ENCODE measurements at regions of chr18 and their contacts with region 1.

Region 1: DNA sequence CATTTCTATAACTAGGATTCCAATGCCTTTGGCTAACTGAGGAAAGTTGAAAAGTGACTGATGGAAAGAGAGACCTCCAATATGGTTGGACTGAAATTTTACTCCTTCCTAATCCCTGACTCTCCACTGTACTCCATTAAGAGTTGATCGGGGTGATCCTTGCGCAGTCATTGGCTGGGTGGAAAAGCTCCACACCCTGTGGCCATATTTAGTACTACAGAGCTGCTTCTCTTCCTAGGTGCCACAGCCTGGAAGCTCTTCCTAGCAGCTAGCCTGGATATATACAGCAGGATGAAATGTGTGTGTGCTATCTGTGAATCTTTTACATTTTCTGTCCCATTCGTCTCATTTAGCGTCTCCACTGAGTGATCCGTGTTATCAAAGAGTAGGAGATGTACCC is 71.2 kb downstream of the MEP1B start:
- DNase-seq: no peak
- H3K4me3 ChIP-seq: no peak overlapping the region
- H3K27ac ChIP-seq: no peak overlapping the region
- H3K4me1 ChIP-seq: no peaks in the 10 kb centered on the region
- H3K27me3 ChIP-seq: no peaks in the 10 kb centered on the region
- CTCF ChIP-seq: no peak
- POLR2A ChIP-seq: no peak

Region 2: DNA sequence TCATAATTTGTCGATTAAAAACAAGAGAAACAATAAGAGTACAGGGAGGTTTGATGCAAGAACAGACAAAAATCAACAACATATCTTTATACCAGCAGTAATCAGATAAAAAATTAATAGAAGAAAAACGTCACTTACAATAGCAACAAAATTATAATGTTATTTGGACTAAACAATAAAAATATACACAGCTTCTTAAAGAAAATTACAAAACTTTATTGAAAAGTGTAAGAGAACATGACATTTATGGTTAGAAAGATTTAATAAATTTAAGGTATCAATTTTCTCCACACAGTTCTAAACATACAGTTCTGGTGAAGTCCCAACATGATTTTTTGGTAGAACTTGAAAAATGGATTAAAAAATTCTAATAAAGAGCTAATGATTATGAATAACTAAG is 156.5 kb before region 1 on chr18:
- intact Hi-C with region 1: no loop called
- DNase-seq: no peak
- H3K4me3 ChIP-seq: no peak overlapping the region
- H3K27ac ChIP-seq: no peak overlapping the region
- H3K4me1 ChIP-seq: peaks cover 0 to 2% of the 10 kb centered on the region in 2 donors
- H3K27me3 ChIP-seq: no peaks in the 10 kb centered on the region
- CTCF ChIP-seq: no peak
- POLR2A ChIP-seq: no peak

Region 3: GRCh38 chr18:32167975-32168730 is 92.8 kb before region 1 on chr18:
- intact Hi-C with region 1: loop called in 1 of 2 experiments (anchors 10 kb)
- DNase-seq: no peak
- H3K4me3 ChIP-seq: no peak overlapping the region
- H3K27ac ChIP-seq: no peak overlapping the region
- H3K4me1 ChIP-seq: no peaks in the 10 kb centered on the region
- H3K27me3 ChIP-seq: no peaks in the 10 kb centered on the region
- CTCF ChIP-seq: no peak
- POLR2A ChIP-seq: no peak

Region 4: DNA sequence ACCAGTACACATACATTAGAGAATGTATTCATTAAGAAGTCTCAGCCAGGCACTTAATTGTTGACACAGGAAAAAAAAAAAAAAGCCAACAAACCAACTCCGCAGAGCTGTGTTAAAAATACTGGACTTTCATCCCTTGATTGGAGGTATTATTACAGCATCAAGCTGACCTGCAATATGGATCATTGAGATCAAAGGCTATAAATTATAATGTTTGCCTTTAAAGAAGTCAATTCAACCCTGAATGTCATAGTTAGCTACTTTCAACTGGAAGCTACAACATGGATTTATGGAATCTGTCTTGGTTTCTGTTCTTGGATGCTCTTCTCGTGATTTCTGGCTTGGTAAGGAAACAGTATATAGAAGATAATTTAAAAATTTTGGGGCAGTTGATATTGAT is 71.2 kb before region 1 on chr18 and contains the start of gene MEP1B:
- intact Hi-C with region 1: no loop called
- DNase-seq: no peak
- H3K4me3 ChIP-seq: no peak within 1 kb of the TSS
- H3K27ac ChIP-seq: no peak within 1 kb of the TSS
- H3K4me1 ChIP-seq: no peaks in the 10 kb centered on the region
- H3K27me3 ChIP-seq: no peaks in the 10 kb centered on the region
- CTCF ChIP-seq: no peak
- POLR2A ChIP-seq: no peak
- total RNA-seq, gene MEP1B: not detected

Measured in adrenal gland (tissue), 19 donors.